ENCODE measurements at regions of chr17 and their contacts with region 1.

Region 1: DNA sequence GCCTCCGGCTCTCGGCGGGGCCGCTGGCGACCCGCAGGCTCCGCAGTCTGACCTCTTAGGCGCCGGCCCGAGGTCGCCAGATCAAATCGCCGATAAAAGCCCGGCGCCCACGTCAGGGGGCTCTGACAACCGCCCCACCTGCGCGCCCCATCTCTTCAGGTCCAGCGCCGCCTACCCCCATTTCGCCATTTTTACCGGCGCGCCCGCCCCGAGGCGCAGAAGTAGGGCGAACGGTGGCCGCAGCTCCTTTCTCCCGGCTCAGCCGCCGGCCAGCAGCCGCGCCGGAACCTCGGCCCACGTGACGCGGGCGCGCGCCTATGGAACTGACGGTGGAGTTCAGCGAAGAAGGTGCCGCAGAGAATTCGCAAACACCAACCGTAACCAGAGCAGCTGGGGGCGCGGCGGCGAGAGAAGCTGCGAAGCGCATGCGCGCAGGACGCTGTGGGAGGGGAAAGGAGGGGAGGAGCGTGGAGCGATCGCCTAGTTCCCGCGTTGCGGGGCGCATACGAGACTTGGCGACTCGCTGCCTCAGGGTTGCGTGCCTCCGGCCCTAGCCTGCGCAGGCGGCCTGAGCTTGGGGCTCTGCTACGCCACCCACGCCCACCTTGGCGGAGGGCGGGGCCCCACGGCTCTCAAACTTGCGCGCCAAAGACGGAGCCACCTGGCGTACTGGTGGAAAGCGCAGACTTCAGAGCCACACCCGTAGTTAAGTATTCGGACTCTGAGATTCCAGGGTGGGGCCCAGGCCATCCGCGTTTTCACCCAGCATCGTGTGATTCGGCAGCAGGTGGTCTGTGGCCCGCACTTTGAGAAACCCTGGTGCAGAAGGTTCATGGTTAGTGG is at the start of gene TRIM37:
- DNase-seq: peak; percentile 97 to 100 (median 98)
- ATAC-seq: peak; percentile 96
- H3K4me3 ChIP-seq: peak within 1 kb of the TSS; percentile 89 to 93
- H3K4me3 Mint-ChIP-seq: peak within 1 kb of the TSS; percentile 92
- H3K27ac ChIP-seq: peak within 1 kb of the TSS; percentile 87 to 88
- H3K27ac Mint-ChIP-seq: peak within 1 kb of the TSS; percentile 91
- H3K4me1 ChIP-seq: peaks cover 26% of the 10 kb centered on the region
- H3K4me1 Mint-ChIP-seq: peaks cover 38% of the 10 kb centered on the region
- H3K27me3 ChIP-seq: no peaks in the 10 kb centered on the region
- H3K27me3 Mint-ChIP-seq: no peaks in the 10 kb centered on the region
- CTCF ChIP-seq: no peak
- total RNA-seq, gene TRIM37: 17.7 to 20.9 TPM

Region 2: DNA sequence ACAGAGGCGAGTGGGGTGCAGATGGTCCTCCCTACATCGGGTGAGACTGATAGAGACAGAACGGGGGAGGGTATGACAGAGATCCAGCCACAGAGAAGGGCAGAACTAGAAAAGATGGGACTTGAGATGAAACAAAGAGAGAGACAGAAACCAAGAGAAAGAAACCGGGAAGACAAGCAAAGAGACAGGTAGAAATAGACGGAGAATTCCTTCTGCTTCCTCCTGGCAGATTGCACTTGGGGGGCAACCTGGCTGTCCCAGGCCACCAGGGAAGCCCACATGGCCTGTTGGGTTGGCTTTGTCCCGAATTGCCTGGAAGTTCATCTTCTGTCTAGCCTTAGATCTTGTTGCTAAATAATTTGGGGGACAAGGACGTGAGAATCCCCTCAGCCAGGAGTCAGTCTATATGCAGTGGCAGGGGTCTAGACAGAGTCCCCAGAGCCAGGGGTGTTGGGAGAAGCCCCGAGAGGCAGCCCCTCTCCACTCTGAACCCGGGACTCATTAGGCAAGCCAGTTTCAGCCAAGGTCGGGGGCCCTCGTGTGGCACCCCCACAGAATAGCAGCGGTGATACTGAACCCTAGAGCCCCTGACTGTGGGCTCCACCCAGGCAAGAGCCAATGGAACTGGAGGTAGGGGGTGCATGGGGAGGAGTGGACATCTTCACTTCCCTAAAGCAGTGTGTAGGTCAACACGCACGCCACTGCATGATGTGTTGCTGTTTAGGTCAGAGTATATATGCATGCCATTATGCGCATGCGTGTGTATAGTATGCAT is 777.5 kb before region 1 on chr17:
- CTCF ChIA-PET with region 1: no interaction called
- POLR2A ChIA-PET with region 1: interaction called, 3 read pairs
- intact Hi-C with region 1: loop called in 1 of 2 experiments (anchors 5 kb)
- DNase-seq: peak in 8 of 9 experiments; percentile 56 to 90 (median 77)
- ATAC-seq: peak; percentile 36
- H3K4me3 ChIP-seq: peak overlapping the region; percentile 90 to 99
- H3K4me3 Mint-ChIP-seq: peak overlapping the region; percentile 92
- H3K27ac ChIP-seq: peak overlapping the region; percentile 48 to 99
- H3K27ac Mint-ChIP-seq: peak overlapping the region; percentile 96
- H3K4me1 ChIP-seq: peaks cover 47% of the 10 kb centered on the region
- H3K4me1 Mint-ChIP-seq: peaks cover 54% of the 10 kb centered on the region
- H3K27me3 ChIP-seq: no peaks in the 10 kb centered on the region
- H3K27me3 Mint-ChIP-seq: no peaks in the 10 kb centered on the region
- CTCF ChIP-seq: peak; percentile 84

Region 3: GRCh38 chr17:58902322-58902721 is 204.4 kb before region 1 on chr17:
- CTCF ChIA-PET with region 1: no interaction called
- POLR2A ChIA-PET with region 1: no interaction called
- intact Hi-C with region 1: no loop called
- DNase-seq: no peak
- ATAC-seq: no peak
- H3K4me3 ChIP-seq: no peak overlapping the region
- H3K4me3 Mint-ChIP-seq: no peak overlapping the region
- H3K27ac ChIP-seq: no peak overlapping the region
- H3K27ac Mint-ChIP-seq: no peak overlapping the region
- H3K4me1 ChIP-seq: no peaks in the 10 kb centered on the region
- H3K4me1 Mint-ChIP-seq: no peaks in the 10 kb centered on the region
- H3K27me3 ChIP-seq: no peaks in the 10 kb centered on the region
- H3K27me3 Mint-ChIP-seq: peaks cover 10% of the 10 kb centered on the region
- CTCF ChIP-seq: no peak

Region 4: GRCh38 chr17:59155439-59156182 is 48.9 kb after region 1 on chr17 and contains the start of gene PRR11:
- CTCF ChIA-PET with region 1: no interaction called
- POLR2A ChIA-PET with region 1: interaction called, 15 read pairs
- intact Hi-C with region 1: loop called (anchors 1 kb)
- DNase-seq: peak; percentile 82 to 99 (median 90)
- ATAC-seq: peak; percentile 85
- H3K4me3 ChIP-seq: peak within 1 kb of the TSS; percentile 95 to 97
- H3K4me3 Mint-ChIP-seq: no peak within 1 kb of the TSS
- H3K27ac ChIP-seq: peak within 1 kb of the TSS; percentile 62 to 74
- H3K27ac Mint-ChIP-seq: no peak within 1 kb of the TSS
- H3K4me1 ChIP-seq: peaks cover 15% of the 10 kb centered on the region
- H3K4me1 Mint-ChIP-seq: peaks cover 28% of the 10 kb centered on the region
- H3K27me3 ChIP-seq: no peaks in the 10 kb centered on the region
- H3K27me3 Mint-ChIP-seq: no peaks in the 10 kb centered on the region
- CTCF ChIP-seq: no peak
- total RNA-seq, gene PRR11: 0.30 to 0.69 TPM

Region 5: DNA sequence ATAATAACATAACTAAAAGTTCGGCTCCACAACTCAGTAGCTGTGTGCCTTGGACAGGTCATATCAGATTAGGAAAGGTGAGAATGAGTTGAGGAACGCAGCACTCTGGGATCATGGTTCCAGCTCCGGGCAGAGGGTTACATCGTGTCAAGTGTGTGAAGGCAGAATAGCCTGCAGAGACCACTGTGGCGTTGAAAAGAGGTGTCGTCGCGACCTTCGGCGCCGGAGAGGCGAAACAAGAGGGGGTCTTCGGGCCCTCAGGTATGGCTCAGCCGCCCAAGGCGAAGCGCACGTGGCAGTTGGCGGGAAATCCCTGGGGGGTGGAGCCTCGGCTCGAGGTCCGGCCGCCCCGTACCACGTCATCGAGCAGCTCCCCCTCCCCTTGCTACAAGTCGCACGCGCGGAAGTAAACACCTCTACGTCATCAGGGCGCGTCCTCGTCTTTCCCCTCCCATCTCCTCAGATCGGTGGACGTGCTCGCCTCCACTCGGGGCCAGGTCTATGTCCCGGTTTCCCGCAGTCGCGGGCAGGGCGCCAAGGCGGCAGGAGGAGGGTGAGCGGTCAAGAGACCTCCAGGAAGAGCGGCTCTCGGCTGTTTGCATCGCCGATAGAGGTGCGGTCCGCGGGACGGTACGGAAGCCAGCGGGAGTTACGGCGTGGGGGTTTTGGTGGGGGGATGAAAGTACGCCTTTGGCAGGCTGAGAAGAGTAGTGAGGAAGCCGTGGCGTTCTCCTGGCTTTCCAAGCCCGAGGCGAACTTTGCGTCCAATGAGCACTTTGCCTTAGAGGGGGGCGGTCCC is 458.7 kb after region 1 on chr17 and contains the start of gene DHX40:
- CTCF ChIA-PET with region 1: no interaction called
- POLR2A ChIA-PET with region 1: no interaction called
- intact Hi-C with region 1: loop called (anchors 2 to 10 kb)
- DNase-seq: peak; percentile 86 to 99 (median 95)
- ATAC-seq: peak; percentile 89
- H3K4me3 ChIP-seq: peak within 1 kb of the TSS; percentile 94 to 100
- H3K4me3 Mint-ChIP-seq: peak within 1 kb of the TSS; percentile 100
- H3K27ac ChIP-seq: peak within 1 kb of the TSS; percentile 89 to 97
- H3K27ac Mint-ChIP-seq: peak within 1 kb of the TSS; percentile 100
- H3K4me1 ChIP-seq: peaks cover 17% of the 10 kb centered on the region
- H3K4me1 Mint-ChIP-seq: peaks cover 23% of the 10 kb centered on the region
- H3K27me3 ChIP-seq: no peaks in the 10 kb centered on the region
- H3K27me3 Mint-ChIP-seq: no peaks in the 10 kb centered on the region
- CTCF ChIP-seq: no peak
- total RNA-seq, gene DHX40: 72.7 to 72.8 TPM

Region 6: GRCh38 chr17:59892924-59893676 is 786.4 kb after region 1 on chr17 and contains the starts of genes RPS6KB1 and TUBD1:
- CTCF ChIA-PET with region 1: no interaction called
- POLR2A ChIA-PET with region 1: no interaction called
- intact Hi-C with region 1: loop called (anchors 2 kb)
- DNase-seq: peak; percentile 94 to 100 (median 97)
- ATAC-seq: peak; percentile 91
- H3K4me3 ChIP-seq: peak within 1 kb of the TSS; percentile 66 to 82
- H3K4me3 Mint-ChIP-seq: peak within 1 kb of the TSS; percentile 100
- H3K27ac ChIP-seq: peak within 1 kb of the TSS; percentile 89 to 93
- H3K27ac Mint-ChIP-seq: peak within 1 kb of the TSS; percentile 100
- H3K4me1 ChIP-seq: peaks cover 37% of the 10 kb centered on the region
- H3K4me1 Mint-ChIP-seq: peaks cover 56% of the 10 kb centered on the region
- H3K27me3 ChIP-seq: no peaks in the 10 kb centered on the region
- H3K27me3 Mint-ChIP-seq: no peaks in the 10 kb centered on the region
- CTCF ChIP-seq: no peak
- total RNA-seq, gene RPS6KB1: 153 to 171 TPM
- total RNA-seq, gene TUBD1: 9.7 to 11.0 TPM

Region 7: DNA sequence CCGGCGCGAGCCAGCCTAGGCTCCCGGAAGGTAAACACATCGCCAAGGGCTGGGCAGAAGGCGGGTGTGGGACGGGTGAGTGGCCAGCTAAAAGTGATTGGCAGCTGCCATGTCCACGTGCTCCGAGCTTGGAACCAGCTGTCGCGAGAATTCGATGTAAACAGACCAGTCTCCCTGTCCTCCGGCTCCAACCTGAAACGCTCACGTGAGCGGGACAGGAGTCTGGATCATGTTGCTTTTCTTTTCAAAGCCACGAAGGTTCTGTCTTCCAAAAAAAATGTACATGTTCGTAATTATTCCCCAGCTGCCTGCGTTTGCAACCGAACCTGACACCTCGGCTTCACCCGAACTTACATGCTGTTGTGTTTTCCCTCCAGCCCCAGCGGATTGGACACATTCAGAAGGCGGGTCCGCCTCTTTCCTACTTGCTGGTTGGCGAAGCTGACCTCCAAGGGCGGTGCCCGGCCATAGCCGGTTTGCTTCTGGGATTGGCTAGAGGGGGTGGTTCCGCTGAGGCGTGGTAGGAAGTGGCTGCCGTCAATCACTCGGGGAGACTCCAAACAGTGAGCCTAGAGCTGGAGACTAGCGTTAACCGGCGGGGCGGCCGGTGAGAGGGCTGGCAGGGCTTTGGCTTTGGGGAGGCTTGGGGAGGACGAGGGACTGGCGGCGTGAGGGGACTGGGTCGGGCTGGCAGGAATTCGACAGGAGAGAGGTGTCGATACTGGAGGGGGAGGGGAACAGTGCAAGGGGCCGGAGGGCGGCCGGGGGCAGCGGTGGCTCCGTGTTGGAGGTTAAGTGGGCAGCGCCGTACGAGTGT is 1570.8 kb after region 1 on chr17 and contains the start of gene BCAS3:
- CTCF ChIA-PET with region 1: no interaction called
- POLR2A ChIA-PET with region 1: no interaction called
- intact Hi-C with region 1: loop called in 1 of 2 experiments (anchors 5 kb)
- DNase-seq: peak; percentile 92 to 98 (median 96)
- ATAC-seq: peak; percentile 95
- H3K4me3 ChIP-seq: peak within 1 kb of the TSS; percentile 75 to 76
- H3K4me3 Mint-ChIP-seq: peak within 1 kb of the TSS; percentile 97
- H3K27ac ChIP-seq: peak within 1 kb of the TSS; percentile 58 to 74
- H3K27ac Mint-ChIP-seq: peak within 1 kb of the TSS; percentile 98
- H3K4me1 ChIP-seq: peaks cover 11% of the 10 kb centered on the region
- H3K4me1 Mint-ChIP-seq: peaks cover 22% of the 10 kb centered on the region
- H3K27me3 ChIP-seq: no peaks in the 10 kb centered on the region
- H3K27me3 Mint-ChIP-seq: no peaks in the 10 kb centered on the region
- CTCF ChIP-seq: no peak
- total RNA-seq, gene BCAS3: 17.3 to 20.3 TPM